PC-9 (cell line): ENCODE measurements at regions of chr7 and their contacts with region 1.

Region 1: GRCh38 chr7:46352004-46352954 is 431.2 kb upstream of the IGFBP3 start:
- DNase-seq: peak; percentile 81 to 88
- H3K4me3 ChIP-seq: no peak overlapping the region
- H3K27ac ChIP-seq: peak overlapping the region; percentile 14; the same call in 1 of the 2 replicates
- H3K4me1 ChIP-seq: peaks cover 8% of the 10 kb centered on the region
- H3K27me3 ChIP-seq: no peaks in the 10 kb centered on the region
- CTCF ChIP-seq: peak; percentile 97

Region 2: GRCh38 chr7:45638916-45639315 is 713.4 kb before region 1 on chr7:
- CTCF ChIA-PET with region 1: no interaction called
- POLR2A ChIA-PET with region 1: no interaction called
- intact Hi-C with region 1: no loop called
- DNase-seq: no peak
- H3K4me3 ChIP-seq: no peak overlapping the region
- H3K27ac ChIP-seq: no peak overlapping the region
- H3K4me1 ChIP-seq: no peaks in the 10 kb centered on the region
- H3K27me3 ChIP-seq: peaks cover 55% of the 10 kb centered on the region
- CTCF ChIP-seq: no peak

Region 3: DNA sequence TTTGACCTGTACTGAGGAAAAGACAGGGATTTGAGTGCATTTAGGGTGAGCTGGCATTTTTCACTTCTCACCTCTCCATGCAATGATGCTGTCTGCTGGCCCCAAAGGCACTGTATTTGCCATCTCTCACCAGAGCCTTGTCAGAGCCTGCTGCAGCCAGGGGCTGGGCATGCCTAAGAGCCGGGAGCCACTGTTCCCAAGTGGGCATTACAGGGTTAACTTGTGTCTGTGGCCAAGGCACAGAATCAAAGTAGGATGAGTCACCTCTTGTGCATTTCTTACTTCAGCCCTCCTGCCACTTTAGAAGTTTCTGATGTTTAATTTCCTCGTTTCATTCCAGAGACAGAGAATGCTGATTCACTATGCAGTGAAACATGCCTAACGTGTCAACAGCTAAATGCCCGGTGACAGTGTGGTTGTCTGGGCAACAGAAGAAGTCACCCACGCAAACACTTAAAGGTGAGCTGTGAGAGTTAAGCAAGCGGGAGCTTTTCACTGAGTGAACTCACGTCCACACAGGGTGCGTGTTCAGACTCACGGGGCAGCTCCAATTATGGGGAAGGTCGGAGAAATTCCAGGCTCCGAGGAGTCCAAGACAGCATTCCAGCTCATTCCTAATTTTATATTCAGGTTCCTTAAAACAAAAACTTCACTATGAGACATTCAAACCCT is 374.1 kb before region 1 on chr7:
- CTCF ChIA-PET with region 1: no interaction called
- POLR2A ChIA-PET with region 1: interaction called, 3 read pairs
- intact Hi-C with region 1: loop called (anchors 2 kb)
- DNase-seq: peak; percentile 91 to 100
- H3K4me3 ChIP-seq: peak overlapping the region; percentile 23; the same call in 1 of the 2 replicates
- H3K27ac ChIP-seq: peak overlapping the region; percentile 97
- H3K4me1 ChIP-seq: peaks cover 52% of the 10 kb centered on the region
- H3K27me3 ChIP-seq: no peaks in the 10 kb centered on the region
- CTCF ChIP-seq: no peak

Region 4: GRCh38 chr7:46145412-46145811 is 206.9 kb before region 1 on chr7:
- CTCF ChIA-PET with region 1: no interaction called
- POLR2A ChIA-PET with region 1: no interaction called
- intact Hi-C with region 1: loop called (anchors 1 kb)
- DNase-seq: peak; percentile 89 to 99
- H3K4me3 ChIP-seq: no peak overlapping the region
- H3K27ac ChIP-seq: peak overlapping the region; percentile 80
- H3K4me1 ChIP-seq: peaks cover 29% of the 10 kb centered on the region
- H3K27me3 ChIP-seq: no peaks in the 10 kb centered on the region
- CTCF ChIP-seq: no peak

Region 5: GRCh38 chr7:46215987-46216567 is 136.2 kb before region 1 on chr7:
- CTCF ChIA-PET with region 1: no interaction called
- POLR2A ChIA-PET with region 1: interaction called, 3 read pairs
- intact Hi-C with region 1: loop called (anchors 1 kb)
- DNase-seq: no peak
- H3K4me3 ChIP-seq: no peak overlapping the region
- H3K27ac ChIP-seq: no peak overlapping the region
- H3K4me1 ChIP-seq: peaks cover 22% of the 10 kb centered on the region
- H3K27me3 ChIP-seq: no peaks in the 10 kb centered on the region
- CTCF ChIP-seq: no peak

Region 6: DNA sequence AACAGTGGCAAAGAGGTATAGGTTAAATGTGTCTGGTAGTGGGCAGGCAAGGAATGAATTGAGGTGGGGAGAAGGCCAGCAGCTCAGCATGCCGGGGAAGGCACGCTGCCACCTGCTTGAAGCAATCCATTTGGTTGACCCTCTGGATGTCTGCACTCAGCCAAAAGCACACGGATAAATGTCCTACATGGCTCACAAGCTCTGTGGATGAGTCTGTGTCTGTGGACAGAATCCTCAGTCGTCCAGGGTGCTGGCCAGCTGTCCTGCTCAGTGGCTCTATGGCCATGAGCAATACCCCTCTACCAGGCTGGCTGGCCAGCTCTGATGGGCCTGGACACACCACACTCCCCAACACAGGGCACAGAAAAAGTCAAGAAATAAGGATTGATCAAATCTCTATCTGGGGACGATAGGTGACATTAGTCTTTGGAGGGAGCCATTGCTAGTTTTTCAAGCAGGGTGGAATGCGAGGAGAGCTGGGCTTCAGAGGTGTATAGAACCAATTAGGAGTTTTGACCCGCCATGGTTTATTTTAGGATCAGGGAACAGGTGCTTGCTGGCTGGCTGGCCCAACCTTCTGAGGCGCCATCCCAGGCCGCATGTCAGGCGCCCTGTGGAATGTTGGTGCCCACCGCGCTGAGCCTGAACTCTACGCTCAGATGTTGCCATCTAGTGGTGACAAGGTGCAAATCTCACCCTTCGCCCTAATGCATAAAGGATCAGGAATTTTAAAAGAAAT is 736.2 kb after region 1 on chr7:
- CTCF ChIA-PET with region 1: no interaction called
- POLR2A ChIA-PET with region 1: no interaction called
- intact Hi-C with region 1: loop called (anchors 1 kb)
- DNase-seq: peak; percentile 56 to 67
- H3K4me3 ChIP-seq: no peak overlapping the region
- H3K27ac ChIP-seq: no peak overlapping the region
- H3K4me1 ChIP-seq: no peaks in the 10 kb centered on the region
- H3K27me3 ChIP-seq: no peaks in the 10 kb centered on the region
- CTCF ChIP-seq: peak; percentile 99

Region 7: GRCh38 chr7:47483604-47484273 is 1131.5 kb after region 1 on chr7:
- CTCF ChIA-PET with region 1: no interaction called
- POLR2A ChIA-PET with region 1: no interaction called
- intact Hi-C with region 1: no loop called
- DNase-seq: no peak
- H3K4me3 ChIP-seq: no peak overlapping the region
- H3K27ac ChIP-seq: peak overlapping the region; percentile 21; the same call in 1 of the 2 replicates
- H3K4me1 ChIP-seq: peaks cover 70% of the 10 kb centered on the region
- H3K27me3 ChIP-seq: no peaks in the 10 kb centered on the region
- CTCF ChIP-seq: 0 out of 2 replicates have a peak, but pooled peaks have one; percentile 18